Activated CD4-positive, alpha-beta T cell treated with anti-CD3 and anti-CD28 coated beads, Interleukin-2, amount 10 ng/mL, durations not matched to agents 24 days and 14 days (primary cell): ENCODE measurements at regions of chr14 and their contacts with region 1.

Region 1: DNA sequence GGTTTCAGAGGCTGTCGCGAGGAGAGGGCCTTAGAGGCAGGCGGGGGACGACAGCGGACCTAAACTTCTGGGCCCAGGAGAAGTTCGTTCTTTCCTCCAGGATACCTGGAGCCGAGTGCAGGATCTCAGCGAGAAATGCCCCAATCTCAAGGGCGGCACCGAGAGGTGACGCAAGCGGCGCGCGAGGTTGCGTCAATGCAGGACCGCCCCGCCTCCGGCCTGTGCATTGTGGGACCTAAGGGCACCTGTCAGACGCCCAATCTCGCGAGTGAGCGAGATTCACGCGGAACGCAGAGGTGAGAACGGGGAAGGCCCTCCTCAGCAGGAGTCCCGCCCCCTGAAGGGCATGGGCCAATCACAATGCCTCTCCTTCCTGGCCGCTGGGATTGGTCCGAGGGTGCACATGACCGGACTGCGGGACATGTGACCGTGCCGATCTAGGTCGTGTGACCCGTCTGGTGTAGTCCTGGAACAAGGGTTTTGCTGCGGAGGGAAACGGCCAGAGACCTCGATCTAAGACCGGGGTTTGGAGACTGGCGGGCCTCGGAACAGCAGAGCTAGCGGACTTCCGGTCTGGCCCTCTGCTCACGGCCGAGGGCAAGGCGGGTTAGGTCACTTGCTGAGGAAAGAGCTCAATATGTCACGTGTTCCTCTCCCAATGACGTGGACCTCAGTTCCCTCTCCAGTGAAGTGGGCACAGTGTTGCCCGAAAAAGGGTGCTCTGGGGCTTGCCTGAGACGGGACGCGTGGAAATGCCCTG is 16.3 kb upstream of the DYNC1H1 start:
- DNase-seq: peak; percentile 100
- H3K4me3 Mint-ChIP-seq: peak overlapping the region; percentile 95
- H3K27ac Mint-ChIP-seq: peak overlapping the region; percentile 97
- H3K4me1 Mint-ChIP-seq: peaks cover 17% of the 10 kb centered on the region
- H3K27me3 Mint-ChIP-seq: peaks cover 22% of the 10 kb centered on the region

Region 2: GRCh38 chr14:101721951-101722661 is 226.0 kb before region 1 on chr14:
- intact Hi-C with region 1: loop called (anchors 5 kb)
- DNase-seq: peak; percentile 91
- H3K4me3 Mint-ChIP-seq: peak overlapping the region; percentile 81
- H3K27ac Mint-ChIP-seq: peak overlapping the region; percentile 95
- H3K4me1 Mint-ChIP-seq: peaks cover 37% of the 10 kb centered on the region
- H3K27me3 Mint-ChIP-seq: no peaks in the 10 kb centered on the region

Region 3: DNA sequence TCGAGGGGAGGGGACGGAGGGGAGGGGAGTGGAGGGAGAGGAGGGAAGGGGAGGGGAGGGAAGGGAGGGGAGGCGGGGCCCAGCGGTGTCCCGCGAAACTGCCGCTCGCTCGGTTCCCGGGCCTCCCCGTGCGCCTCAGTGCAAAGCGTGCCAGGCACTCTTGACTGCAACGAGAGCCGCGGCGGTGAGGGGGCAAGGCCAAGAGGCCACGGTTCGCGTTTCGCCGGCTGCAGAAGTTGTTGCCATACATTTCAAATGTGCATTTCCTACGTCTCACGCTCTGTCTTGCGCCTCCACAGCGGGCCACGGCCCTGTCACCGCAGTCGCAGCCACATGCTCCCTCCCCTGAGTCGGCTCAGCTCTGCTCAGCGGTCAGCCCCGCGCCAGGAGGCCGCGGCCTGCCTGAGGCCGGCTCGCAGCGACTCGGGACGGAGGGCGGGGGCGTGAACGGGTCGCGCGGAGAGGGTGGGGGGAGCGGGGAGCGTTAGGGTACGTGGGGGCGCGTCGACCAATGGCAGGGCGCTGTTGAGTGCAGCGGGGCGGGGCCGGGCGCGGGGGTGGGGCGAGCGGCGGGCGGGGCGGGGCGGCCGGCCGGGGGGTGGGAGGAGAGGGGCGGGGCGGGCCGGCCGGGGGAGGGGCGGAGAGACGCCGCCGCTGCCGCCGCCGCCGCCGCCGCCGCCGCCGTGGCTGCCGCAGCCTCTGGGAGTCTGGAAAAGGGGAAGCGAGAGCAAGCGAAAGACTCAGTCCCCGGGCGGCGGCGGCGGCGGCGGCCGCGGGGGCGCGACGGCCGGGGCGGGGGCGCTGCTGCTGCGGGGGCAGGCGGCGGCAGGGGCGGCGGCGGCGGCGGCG is 186.8 kb before region 1 on chr14 and contains the start of gene PPP2R5C:
- intact Hi-C with region 1: loop called (anchors 1 kb)
- DNase-seq: peak; percentile 94
- H3K4me3 Mint-ChIP-seq: peak within 1 kb of the TSS; percentile 90
- H3K27ac Mint-ChIP-seq: peak within 1 kb of the TSS; percentile 86
- H3K4me1 Mint-ChIP-seq: peaks cover 39% of the 10 kb centered on the region
- H3K27me3 Mint-ChIP-seq: peaks cover 3% of the 10 kb centered on the region
- total RNA-seq, gene PPP2R5C: 160 and 181 TPM in 2 replicates

Region 4: DNA sequence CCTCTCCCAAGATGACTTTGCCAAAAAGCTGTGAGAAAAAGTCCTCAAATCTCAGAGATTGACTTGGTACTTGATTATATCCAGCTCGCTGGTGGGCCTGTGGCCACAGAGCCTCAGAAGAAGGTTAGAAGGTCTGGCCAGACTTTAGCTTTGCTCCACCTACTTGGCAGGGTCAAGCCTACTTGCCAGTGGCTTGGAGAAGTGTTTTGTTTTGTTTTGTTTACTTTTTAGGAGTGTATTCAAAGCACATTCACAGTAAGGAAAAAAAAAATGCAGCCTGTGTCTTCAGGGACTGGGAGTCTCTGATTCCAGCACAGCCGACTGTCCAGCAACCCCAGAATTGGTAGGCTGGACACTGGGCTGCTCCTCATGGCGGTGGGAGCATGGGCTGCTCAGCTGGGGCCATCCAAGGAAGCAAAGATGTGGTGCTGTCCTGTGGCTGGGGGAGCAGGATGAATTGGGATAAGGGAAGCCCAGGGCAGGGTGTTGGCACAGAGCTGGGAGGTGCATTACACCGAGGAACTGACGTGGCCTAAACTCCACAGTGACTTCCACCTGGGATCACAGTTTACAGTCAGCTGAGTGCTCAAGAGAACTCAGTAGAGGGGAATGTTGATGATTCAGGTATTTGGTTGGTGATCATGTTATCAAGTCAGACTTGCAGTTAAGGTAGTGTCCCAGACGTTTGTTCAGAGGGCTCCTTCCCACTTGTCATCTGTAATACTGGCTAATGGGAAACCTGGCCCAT is 113.1 kb before region 1 on chr14:
- intact Hi-C with region 1: no loop called
- DNase-seq: no peak
- H3K4me3 Mint-ChIP-seq: no peak overlapping the region
- H3K27ac Mint-ChIP-seq: peak overlapping the region; percentile 25
- H3K4me1 Mint-ChIP-seq: peaks cover 54% of the 10 kb centered on the region
- H3K27me3 Mint-ChIP-seq: no peaks in the 10 kb centered on the region

Region 5: DNA sequence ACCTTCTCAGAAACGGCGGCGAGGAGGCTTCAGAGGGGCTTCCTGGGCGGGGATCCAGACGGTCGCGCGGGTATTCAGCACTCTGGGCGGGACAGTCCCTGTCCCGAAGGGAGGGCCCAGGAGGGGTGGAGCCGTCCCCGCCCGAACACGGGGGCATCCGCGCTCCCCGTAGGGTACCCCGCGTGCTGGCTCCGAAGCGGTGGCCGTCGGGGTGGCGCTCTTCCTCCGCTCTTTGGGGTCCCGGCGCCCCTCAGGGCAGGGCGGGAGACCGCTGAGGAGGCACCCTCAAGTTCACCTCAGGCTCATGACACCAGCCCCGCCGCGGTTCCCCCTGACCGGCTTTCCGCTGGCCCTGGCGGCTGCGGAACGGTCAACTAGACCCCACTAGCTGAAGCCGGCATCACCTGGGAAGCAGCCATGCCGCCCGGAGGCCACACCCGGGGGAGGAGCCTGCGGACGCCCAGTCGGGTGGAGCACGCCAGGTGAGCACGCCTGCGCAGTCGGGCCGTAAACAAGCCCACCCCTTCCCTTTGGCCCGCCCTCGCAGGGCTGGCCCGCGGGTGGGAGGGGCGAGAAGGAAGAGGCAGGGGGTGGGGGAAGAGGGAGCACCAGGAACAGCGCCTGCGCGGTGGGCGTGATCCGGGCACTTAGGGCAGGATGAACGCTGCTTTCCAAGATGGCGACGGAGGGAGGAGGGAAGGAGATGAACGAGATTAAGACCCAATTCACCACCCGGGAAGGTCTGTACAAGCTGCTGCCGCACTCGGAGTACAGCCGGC is 191.4 kb after region 1 on chr14 and contains the start of gene WDR20:
- intact Hi-C with region 1: loop called (anchors 1 kb)
- DNase-seq: peak; percentile 100
- H3K4me3 Mint-ChIP-seq: peak within 1 kb of the TSS; percentile 97
- H3K27ac Mint-ChIP-seq: peak within 1 kb of the TSS; percentile 95
- H3K4me1 Mint-ChIP-seq: peaks cover 21% of the 10 kb centered on the region
- H3K27me3 Mint-ChIP-seq: no peaks in the 10 kb centered on the region
- total RNA-seq, gene WDR20: 30.4 and 31.0 TPM in 2 replicates

Region 6: GRCh38 chr14:102437997-102438915 is 490.2 kb after region 1 on chr14:
- intact Hi-C with region 1: no loop called
- DNase-seq: peak; percentile 92
- H3K4me3 Mint-ChIP-seq: peak overlapping the region; percentile 43
- H3K27ac Mint-ChIP-seq: no peak overlapping the region
- H3K4me1 Mint-ChIP-seq: peaks cover 3% of the 10 kb centered on the region
- H3K27me3 Mint-ChIP-seq: no peaks in the 10 kb centered on the region